ENCODE measurements at regions of chr1 and their contacts with region 1.

Region 1: DNA sequence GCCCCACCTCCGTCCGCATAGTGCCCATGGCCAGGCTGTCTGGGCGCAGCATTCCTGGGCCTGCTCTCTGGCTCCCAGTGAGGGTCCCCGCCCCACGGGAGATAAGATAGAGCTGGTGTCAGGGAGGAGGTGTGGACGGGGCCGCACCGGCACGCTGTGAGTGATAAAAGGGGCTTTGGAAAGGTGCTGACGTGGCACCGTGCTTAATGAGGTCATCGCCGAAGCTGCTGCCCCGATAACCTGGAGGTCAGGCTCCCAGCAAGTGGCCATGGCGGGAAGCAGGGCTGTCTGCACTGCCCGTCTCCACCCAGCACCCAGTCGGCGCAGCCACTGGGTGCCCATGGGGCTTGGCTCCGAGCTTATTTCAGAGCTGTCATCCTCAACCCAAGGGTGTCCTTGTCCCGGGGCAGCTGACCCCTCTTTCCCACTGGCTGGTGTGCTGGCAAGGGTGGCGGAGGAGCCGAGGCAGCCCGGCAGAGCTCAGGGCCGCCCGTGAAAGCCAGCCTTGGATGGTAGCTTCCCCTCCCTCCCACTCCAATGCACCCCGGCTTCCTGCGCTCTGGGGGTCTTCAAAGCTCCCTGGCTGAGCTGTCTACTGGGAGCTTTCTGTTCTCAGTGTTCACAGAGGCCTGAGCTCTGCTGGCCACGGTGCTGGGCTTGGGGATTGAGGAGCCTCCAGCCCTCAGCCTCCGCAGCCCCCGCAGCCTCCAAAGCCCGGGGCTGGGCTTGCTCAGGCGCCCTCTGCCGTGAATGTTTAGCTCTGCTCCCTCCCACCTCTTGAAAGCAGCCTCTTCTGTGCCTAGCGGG is 105.1 kb upstream of the ARHGEF16 start:
- DNase-seq: peak; percentile 91

Region 2: DNA sequence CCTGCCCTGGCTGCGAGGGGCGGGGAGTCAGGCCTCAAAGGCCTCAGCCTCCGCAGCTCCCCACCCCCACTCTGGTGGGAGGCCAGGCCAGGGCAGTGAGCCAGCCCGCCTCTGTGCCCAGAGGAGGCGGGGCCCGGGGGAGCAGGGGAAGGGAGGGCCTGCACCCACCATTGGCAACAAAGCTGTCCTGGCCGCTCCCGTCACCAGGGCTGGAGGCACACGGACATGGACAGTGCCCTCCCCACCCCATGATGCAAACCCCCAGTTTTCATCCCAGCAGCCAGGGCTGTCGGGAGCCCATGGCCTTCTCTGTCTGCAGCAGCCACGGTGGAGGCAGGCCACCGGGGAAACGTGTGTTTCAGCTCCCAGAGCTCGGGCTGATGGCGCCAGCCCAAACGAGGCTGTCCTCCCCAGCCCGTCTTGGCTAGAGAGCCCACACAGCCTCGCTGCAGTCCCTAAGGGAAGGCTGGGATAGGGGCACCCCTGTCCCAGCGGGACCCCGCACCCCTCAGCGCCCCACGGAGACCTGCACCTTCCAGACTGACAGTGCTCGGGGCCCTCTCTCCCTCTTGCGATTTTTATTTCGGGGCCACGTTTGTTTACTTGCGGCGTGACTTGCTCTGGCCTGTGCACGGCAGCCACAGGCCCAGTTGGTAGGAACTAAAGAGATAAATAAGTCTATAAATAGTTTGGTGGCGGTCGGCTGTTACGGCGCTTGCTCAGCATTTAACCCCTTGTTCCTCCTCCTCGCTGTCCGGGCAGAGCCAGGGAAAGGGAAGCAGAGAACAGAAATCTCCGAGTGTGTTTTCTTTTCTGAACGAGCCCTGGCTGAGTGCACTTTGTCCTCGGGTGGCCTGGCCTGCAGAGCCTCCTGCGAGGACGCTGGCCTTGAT is 178.6 kb before region 1 on chr1:
- intact Hi-C with region 1: loop called (anchors 2 kb)
- DNase-seq: peak; percentile 83

Region 3: DNA sequence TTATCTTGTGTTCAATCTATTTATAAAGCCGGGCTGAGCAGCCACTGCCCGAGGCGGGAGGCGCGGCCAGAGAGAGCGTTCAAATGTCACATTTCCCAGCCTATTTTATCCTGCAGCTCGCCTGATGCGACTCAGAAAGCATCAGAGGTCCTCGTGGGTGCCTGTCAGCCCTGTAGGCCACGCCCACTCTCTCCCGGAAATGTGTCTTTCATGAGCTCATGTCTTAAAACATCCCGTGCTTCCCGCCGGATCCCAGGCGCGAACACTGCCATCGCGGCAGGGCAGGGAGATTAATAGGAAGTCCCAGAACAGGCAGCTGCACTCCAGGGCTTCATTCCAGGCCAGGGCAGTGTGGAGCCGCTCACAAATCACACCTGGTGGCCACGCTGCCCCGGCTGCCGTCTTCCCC is 162.8 kb before region 1 on chr1:
- intact Hi-C with region 1: loop called (anchors 5 kb)
- DNase-seq: peak; percentile 93

Region 4: GRCh38 chr1:3327936-3328590 is 21.3 kb before region 1 on chr1:
- intact Hi-C with region 1: loop called (anchors 2 kb)
- DNase-seq: no peak

Region 5: DNA sequence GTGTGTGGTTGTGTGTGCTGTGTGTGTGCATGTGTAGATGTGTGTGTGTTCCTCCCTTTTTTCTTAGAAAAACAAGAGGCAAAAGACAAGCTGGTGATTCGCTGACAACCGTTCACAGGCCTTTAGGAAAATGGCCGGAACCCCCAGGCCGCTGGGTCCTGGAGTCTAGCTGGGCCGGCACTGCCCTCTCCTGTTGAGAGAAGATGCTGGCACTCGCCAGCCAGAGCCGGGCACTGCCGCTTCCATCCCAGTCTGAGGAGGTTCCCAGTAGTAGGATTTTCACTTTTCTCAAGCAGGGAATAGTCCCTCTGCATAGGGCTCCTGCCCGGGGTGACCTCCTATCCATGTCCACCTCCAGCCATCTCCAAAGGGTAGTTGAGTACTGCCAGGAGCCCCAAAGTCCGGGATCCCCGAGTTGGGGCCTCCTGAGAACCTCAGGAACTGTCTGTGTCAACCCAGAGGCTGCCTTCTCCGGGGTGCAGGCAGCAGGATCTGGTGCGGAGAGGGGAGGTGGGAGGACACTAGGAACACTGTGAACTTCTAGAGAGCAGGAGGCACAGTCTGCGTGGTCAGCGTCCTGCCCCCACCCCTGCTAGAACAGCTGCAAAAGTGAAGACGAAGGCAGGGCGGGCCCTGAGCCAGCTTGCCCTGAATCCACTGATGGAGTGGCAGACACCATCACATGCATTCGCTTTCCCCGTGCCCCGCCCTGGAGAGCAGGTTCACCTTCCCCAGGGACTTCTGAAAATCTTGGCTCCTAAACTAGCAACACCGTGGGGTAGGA is 61.0 kb after region 1 on chr1:
- intact Hi-C with region 1: no loop called
- DNase-seq: no peak